Astrocyte of the cerebellum (primary cell): ENCODE measurements at regions of chr9 and their contacts with region 1.

Region 1: GRCh38 chr9:134455934-134456739 is 129.9 kb downstream of the RXRA start:
- DNase-seq: peak; percentile 93
- H3K4me3 ChIP-seq: no peak overlapping the region
- CTCF ChIP-seq: peak; percentile 30

Region 2: DNA sequence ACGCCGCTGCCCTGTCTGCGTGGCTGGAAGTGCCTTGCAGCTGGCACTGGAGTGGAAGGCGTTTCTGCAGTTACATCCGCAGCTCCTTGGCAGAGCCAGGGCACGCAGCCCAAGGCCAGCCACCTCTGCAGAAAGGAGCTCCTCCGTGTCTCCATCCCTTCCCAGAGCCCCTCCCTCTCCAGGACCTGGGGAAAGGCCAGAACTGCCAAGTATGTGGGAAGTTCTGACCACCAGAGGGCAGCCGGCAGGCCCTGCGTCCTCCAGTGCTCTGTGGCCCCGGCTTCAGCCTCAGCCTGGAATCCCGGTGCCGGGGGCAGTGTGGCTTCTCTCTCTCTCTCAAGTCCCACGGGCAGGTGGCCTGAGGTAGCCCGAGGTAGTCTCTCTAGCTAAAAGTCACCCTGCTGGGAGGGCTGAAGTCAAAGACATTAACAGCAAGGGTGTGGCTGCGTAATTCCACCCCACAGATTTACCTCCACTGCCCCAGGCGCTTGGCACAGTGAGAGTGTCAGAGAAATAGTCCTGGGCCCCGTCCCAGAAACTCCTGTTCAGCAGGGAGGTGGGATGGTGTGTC is 322.8 kb after region 1 on chr9:
- in situ Hi-C with region 1: loop called (anchors 10 kb)
- DNase-seq: peak; percentile 29
- H3K4me3 ChIP-seq: no peak overlapping the region
- CTCF ChIP-seq: peak; percentile 77